CD8-positive, alpha-beta T cell (primary cell): ENCODE measurements at regions of chr20 and their contacts with region 1.

Region 1: GRCh38 chr20:49982346-49983122 is at the start of gene SNAI1:
- DNase-seq: peak; percentile 65 to 94 (median 82)
- ATAC-seq: peak; percentile 92
- H3K4me3 ChIP-seq: peak within 1 kb of the TSS; percentile 35 to 51
- H3K4me3 Mint-ChIP-seq: peak within 1 kb of the TSS; percentile 72
- H3K27ac ChIP-seq: peak within 1 kb of the TSS in 1 of 2 experiments; percentile 51
- H3K27ac Mint-ChIP-seq: peak within 1 kb of the TSS; percentile 79
- H3K4me1 ChIP-seq: peaks cover 24% of the 10 kb centered on the region
- H3K4me1 Mint-ChIP-seq: peaks cover 28% of the 10 kb centered on the region
- H3K27me3 ChIP-seq: no peaks in the 10 kb centered on the region
- H3K27me3 Mint-ChIP-seq: no peaks in the 10 kb centered on the region
- CTCF ChIP-seq: peak; percentile 55
- total RNA-seq, gene SNAI1: 3.0 to 3.1 TPM

Region 2: DNA sequence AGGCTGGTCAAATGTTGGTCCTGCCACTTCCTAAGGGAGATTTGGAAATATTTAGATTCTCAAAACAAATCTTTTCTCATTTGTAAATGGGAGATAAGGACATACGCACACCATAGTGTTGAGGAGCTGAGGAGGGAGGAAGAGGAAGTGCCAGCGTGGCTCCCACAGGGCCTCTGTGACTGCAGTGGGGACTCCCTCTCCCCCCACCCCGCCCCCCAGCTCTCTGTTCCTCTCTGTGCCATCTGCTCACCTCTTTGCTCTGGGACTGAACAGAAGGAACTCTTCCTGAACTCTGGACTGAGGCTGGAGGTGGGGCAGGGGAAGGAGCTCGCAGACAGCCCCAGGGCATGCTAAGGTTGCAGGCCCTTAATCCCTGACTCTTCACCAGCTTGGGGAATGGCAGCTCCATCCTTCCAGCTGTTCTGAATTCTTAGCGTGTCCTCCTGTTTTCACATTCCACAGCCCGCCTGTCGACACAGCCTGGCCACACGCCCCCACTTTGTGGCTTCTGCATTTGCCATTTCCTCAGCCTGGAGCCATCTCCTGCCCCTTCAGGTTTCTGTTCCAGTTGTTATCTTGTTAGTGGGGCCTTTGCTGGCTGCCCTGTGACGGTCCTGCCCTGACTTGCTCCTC is 751.9 kb before region 1 on chr20:
- CTCF ChIA-PET with region 1: no interaction called
- POLR2A ChIA-PET with region 1: no interaction called
- intact Hi-C with region 1: no loop called
- DNase-seq: no peak
- ATAC-seq: no peak
- H3K4me3 ChIP-seq: no peak overlapping the region
- H3K4me3 Mint-ChIP-seq: no peak overlapping the region
- H3K27ac ChIP-seq: no peak overlapping the region
- H3K27ac Mint-ChIP-seq: no peak overlapping the region
- H3K4me1 ChIP-seq: no peaks in the 10 kb centered on the region
- H3K4me1 Mint-ChIP-seq: no peaks in the 10 kb centered on the region
- H3K27me3 ChIP-seq: no peaks in the 10 kb centered on the region
- H3K27me3 Mint-ChIP-seq: no peaks in the 10 kb centered on the region
- CTCF ChIP-seq: no peak

Region 3: GRCh38 chr20:49713753-49714712 is 268.5 kb before region 1 on chr20 and contains the start of gene B4GALT5:
- CTCF ChIA-PET with region 1: no interaction called
- POLR2A ChIA-PET with region 1: no interaction called
- intact Hi-C with region 1: no loop called
- DNase-seq: peak; percentile 26 to 83 (median 59)
- ATAC-seq: peak; percentile 85
- H3K4me3 ChIP-seq: peak within 1 kb of the TSS; percentile 79 to 86
- H3K4me3 Mint-ChIP-seq: peak within 1 kb of the TSS; percentile 94
- H3K27ac ChIP-seq: peak within 1 kb of the TSS; percentile 51 to 75
- H3K27ac Mint-ChIP-seq: peak within 1 kb of the TSS; percentile 87
- H3K4me1 ChIP-seq: peaks cover 32% of the 10 kb centered on the region
- H3K4me1 Mint-ChIP-seq: peaks cover 49% of the 10 kb centered on the region
- H3K27me3 ChIP-seq: no peaks in the 10 kb centered on the region
- H3K27me3 Mint-ChIP-seq: no peaks in the 10 kb centered on the region
- CTCF ChIP-seq: no peak
- total RNA-seq, gene B4GALT5: 7.8 to 7.9 TPM

Region 4: GRCh38 chr20:49936153-49937027 is 46.1 kb before region 1 on chr20 and contains the start of gene RNF114:
- CTCF ChIA-PET with region 1: interaction called, 13 read pairs
- POLR2A ChIA-PET with region 1: interaction called, 4 read pairs
- intact Hi-C with region 1: loop called (anchors 1 kb)
- DNase-seq: peak; percentile 82 to 95 (median 90)
- ATAC-seq: peak; percentile 96
- H3K4me3 ChIP-seq: peak within 1 kb of the TSS; percentile 96 to 99
- H3K4me3 Mint-ChIP-seq: peak within 1 kb of the TSS; percentile 98
- H3K27ac ChIP-seq: peak within 1 kb of the TSS; percentile 89 to 95
- H3K27ac Mint-ChIP-seq: peak within 1 kb of the TSS; percentile 96
- H3K4me1 ChIP-seq: peaks cover 30% of the 10 kb centered on the region
- H3K4me1 Mint-ChIP-seq: peaks cover 46% of the 10 kb centered on the region
- H3K27me3 ChIP-seq: no peaks in the 10 kb centered on the region
- H3K27me3 Mint-ChIP-seq: no peaks in the 10 kb centered on the region
- CTCF ChIP-seq: no peak
- total RNA-seq, gene RNF114: 137 to 151 TPM

Region 5: GRCh38 chr20:50061742-50062516 is 79.4 kb after region 1 on chr20:
- CTCF ChIA-PET with region 1: interaction called, 343 read pairs
- POLR2A ChIA-PET with region 1: interaction called, 3 read pairs
- intact Hi-C with region 1: no loop called
- DNase-seq: no peak
- ATAC-seq: no peak
- H3K4me3 ChIP-seq: no peak overlapping the region
- H3K4me3 Mint-ChIP-seq: no peak overlapping the region
- H3K27ac ChIP-seq: no peak overlapping the region
- H3K27ac Mint-ChIP-seq: no peak overlapping the region
- H3K4me1 ChIP-seq: no peaks in the 10 kb centered on the region
- H3K4me1 Mint-ChIP-seq: no peaks in the 10 kb centered on the region
- H3K27me3 ChIP-seq: no peaks in the 10 kb centered on the region
- H3K27me3 Mint-ChIP-seq: no peaks in the 10 kb centered on the region
- CTCF ChIP-seq: no peak

Region 6: GRCh38 chr20:50085452-50086365 is 103.2 kb after region 1 on chr20:
- CTCF ChIA-PET with region 1: interaction called, 59 read pairs
- POLR2A ChIA-PET with region 1: no interaction called
- intact Hi-C with region 1: loop called (anchors 1 kb)
- DNase-seq: peak in 8 of 9 experiments; percentile 20 to 75 (median 38)
- ATAC-seq: peak; percentile 84
- H3K4me3 ChIP-seq: peak overlapping the region; percentile 29 to 38
- H3K4me3 Mint-ChIP-seq: peak overlapping the region; percentile 82
- H3K27ac ChIP-seq: peak overlapping the region; percentile 5 to 50
- H3K27ac Mint-ChIP-seq: peak overlapping the region; percentile 88
- H3K4me1 ChIP-seq: peaks cover 12% of the 10 kb centered on the region
- H3K4me1 Mint-ChIP-seq: peaks cover 35% of the 10 kb centered on the region
- H3K27me3 ChIP-seq: no peaks in the 10 kb centered on the region
- H3K27me3 Mint-ChIP-seq: no peaks in the 10 kb centered on the region
- CTCF ChIP-seq: peak; percentile 83

Region 7: GRCh38 chr20:50179507-50180016 is 197.0 kb after region 1 on chr20:
- CTCF ChIA-PET with region 1: interaction called, 10 read pairs
- POLR2A ChIA-PET with region 1: interaction called, 3 read pairs
- intact Hi-C with region 1: loop called (anchors 1 kb)
- DNase-seq: no peak
- ATAC-seq: peak; percentile 24
- H3K4me3 ChIP-seq: no peak overlapping the region
- H3K4me3 Mint-ChIP-seq: no peak overlapping the region
- H3K27ac ChIP-seq: no peak overlapping the region
- H3K27ac Mint-ChIP-seq: no peak overlapping the region
- H3K4me1 ChIP-seq: no peaks in the 10 kb centered on the region
- H3K4me1 Mint-ChIP-seq: no peaks in the 10 kb centered on the region
- H3K27me3 ChIP-seq: no peaks in the 10 kb centered on the region
- H3K27me3 Mint-ChIP-seq: peaks cover 7% of the 10 kb centered on the region
- CTCF ChIP-seq: peak; percentile 58

Region 8: GRCh38 chr20:50460460-50461267 is 478.1 kb after region 1 on chr20:
- CTCF ChIA-PET with region 1: no interaction called
- POLR2A ChIA-PET with region 1: no interaction called
- intact Hi-C with region 1: loop called (anchors 5 to 10 kb)
- DNase-seq: peak; percentile 65 to 85 (median 81)
- ATAC-seq: peak; percentile 91
- H3K4me3 ChIP-seq: no peak overlapping the region
- H3K4me3 Mint-ChIP-seq: no peak overlapping the region
- H3K27ac ChIP-seq: no peak overlapping the region
- H3K27ac Mint-ChIP-seq: no peak overlapping the region
- H3K4me1 ChIP-seq: peaks cover 3% of the 10 kb centered on the region
- H3K4me1 Mint-ChIP-seq: peaks cover 4% of the 10 kb centered on the region
- H3K27me3 ChIP-seq: peaks cover 0 to 5% of the 10 kb centered on the region in 2 experiments
- H3K27me3 Mint-ChIP-seq: peaks cover 12% of the 10 kb centered on the region
- CTCF ChIP-seq: peak; percentile 72

Region 9: DNA sequence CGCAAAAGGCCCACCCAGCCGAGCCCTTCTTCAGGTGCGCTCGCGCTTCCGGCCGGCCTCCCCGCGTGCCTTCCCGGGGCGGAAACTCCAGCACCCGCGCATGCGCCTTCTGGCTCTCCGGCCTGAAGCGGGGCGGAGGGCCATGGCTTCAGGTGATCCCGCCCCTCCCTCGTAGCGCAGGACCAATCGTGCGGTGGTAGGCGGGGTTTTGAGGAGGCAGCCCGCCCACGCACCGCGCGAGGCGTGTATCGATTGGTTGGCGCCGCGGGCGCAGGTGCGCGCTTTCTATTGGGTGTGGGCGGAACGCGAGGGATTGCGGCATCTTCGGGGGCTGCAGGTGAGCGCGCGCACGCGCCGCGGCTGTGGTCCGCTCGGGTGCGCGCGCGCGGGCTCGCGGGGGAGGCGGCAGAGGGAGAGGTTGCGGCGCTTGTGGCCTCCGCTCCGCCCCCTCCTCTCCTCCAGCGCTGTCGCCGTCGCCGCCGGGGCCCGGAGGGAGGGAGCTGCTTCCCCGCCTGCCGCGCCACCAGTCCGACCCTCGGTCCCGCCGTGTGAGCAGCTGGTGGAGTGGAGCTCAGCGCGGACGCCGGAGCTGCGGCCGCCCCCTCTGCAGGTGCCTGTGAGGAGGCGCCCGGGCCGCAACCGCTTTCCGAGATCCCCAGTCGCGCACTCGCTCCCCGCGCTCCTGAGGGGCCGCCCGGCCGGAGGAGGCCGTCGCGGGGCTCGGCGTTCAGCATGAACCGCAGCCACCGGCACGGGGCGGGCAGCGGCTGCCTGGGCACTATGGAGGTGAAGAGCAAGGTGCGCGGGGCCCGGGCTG is 748.7 kb after region 1 on chr20 and contains the start of gene PARD6B:
- CTCF ChIA-PET with region 1: no interaction called
- POLR2A ChIA-PET with region 1: no interaction called
- intact Hi-C with region 1: loop called in 1 of 2 experiments (anchors 5 kb)
- DNase-seq: peak; percentile 98 to 100 (median 99)
- ATAC-seq: peak; percentile 96
- H3K4me3 ChIP-seq: peak within 1 kb of the TSS; percentile 72 to 81
- H3K4me3 Mint-ChIP-seq: peak within 1 kb of the TSS; percentile 91
- H3K27ac ChIP-seq: peak within 1 kb of the TSS; percentile 51 to 54
- H3K27ac Mint-ChIP-seq: peak within 1 kb of the TSS; percentile 86
- H3K4me1 ChIP-seq: peaks cover 16% of the 10 kb centered on the region
- H3K4me1 Mint-ChIP-seq: peaks cover 34% of the 10 kb centered on the region
- H3K27me3 ChIP-seq: no peaks in the 10 kb centered on the region
- H3K27me3 Mint-ChIP-seq: no peaks in the 10 kb centered on the region
- CTCF ChIP-seq: no peak
- total RNA-seq, gene PARD6B: 5.6 to 6.3 TPM